ENCODE measurements at regions of chr12 and their contacts with region 1.

Region 1: DNA sequence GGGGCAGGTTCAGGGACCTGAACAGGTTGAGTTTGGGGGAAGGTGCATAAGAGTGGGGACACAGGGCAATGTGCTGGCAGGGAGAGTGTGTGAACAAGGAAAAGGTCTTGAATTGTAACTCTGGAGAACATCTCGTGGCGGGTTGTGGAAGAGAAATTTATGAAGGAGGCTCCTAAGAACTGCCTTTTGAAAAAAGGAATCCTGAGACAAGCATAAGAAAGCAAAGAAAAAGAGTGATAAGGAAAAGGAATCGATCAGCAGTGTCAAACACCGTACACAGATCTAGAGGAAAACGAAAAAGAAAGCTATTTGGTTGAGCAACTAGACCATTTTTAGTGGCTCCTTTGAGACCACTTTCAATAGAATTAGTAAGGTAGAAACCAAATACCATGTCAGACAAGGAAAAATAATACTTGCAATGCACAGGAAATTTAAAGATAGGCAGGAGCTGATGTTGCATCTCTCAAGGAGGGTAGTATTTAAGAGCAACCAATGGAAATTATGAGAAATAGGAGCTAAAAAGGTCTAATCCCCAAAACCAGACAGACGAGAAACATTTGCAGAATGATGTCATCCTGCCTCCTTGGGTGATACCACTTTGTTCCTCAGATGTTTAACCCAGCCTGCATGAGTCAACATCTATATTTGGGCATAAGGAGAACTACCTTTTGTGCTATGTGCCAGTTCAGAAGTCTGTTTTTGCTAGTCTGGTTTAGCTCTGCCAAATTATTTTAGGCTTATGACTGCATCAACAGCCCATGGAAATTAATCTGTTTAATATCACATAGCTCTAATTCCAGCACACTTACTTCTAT is 64.5 kb upstream of the STK38L start:
- DNase-seq: peak; percentile 28
- H3K4me3 Mint-ChIP-seq: peak overlapping the region; percentile 49
- H3K27ac Mint-ChIP-seq: peak overlapping the region; percentile 80
- H3K4me1 Mint-ChIP-seq: peaks cover 49% of the 10 kb centered on the region
- H3K27me3 Mint-ChIP-seq: no peaks in the 10 kb centered on the region

Region 2: DNA sequence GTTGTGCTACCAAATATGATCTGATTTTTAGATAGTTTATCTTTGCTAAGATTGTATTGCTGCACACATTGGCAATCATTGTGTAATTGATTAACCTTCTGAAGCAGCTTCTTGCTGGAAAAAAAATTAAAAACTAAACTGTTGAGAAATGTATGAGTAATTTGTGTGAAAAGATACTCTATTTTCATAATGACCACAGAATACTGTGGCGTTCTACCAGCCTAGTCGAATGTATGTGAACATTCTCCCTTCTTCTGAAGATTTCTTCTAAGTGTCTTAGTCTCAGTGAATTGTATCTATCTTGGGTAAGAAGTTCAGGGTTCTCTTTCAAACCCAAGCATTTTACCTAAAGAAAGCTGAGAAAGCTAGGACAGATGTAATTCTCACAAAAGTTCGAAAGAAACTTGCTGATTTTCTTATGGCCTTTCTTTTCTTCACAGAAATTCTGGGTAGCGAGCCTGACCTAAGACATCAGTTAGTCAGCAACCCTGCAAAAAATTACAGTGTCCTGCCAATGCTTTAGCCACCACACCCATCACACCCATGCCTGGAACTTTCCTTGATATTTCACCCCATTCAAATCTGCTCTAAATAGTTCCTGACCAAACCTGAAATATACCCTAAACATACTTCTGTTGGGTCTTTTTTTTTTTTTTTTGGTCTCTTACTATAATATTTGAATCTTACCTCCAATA is 70.1 kb before region 1 on chr12:
- intact Hi-C with region 1: loop called (anchors 1 kb)
- DNase-seq: no peak
- H3K4me3 Mint-ChIP-seq: no peak overlapping the region
- H3K27ac Mint-ChIP-seq: peak overlapping the region; percentile 40
- H3K4me1 Mint-ChIP-seq: peaks cover 41% of the 10 kb centered on the region
- H3K27me3 Mint-ChIP-seq: no peaks in the 10 kb centered on the region

Region 3: GRCh38 chr12:27142101-27142721 is 37.4 kb before region 1 on chr12:
- intact Hi-C with region 1: loop called (anchors 2 kb)
- DNase-seq: no peak
- H3K4me3 Mint-ChIP-seq: no peak overlapping the region
- H3K27ac Mint-ChIP-seq: no peak overlapping the region
- H3K4me1 Mint-ChIP-seq: peaks cover 29% of the 10 kb centered on the region
- H3K27me3 Mint-ChIP-seq: no peaks in the 10 kb centered on the region

Region 4: GRCh38 chr12:27199638-27200300 is 20.2 kb after region 1 on chr12:
- intact Hi-C with region 1: loop called (anchors 1 kb)
- DNase-seq: no peak
- H3K4me3 Mint-ChIP-seq: no peak overlapping the region
- H3K27ac Mint-ChIP-seq: no peak overlapping the region
- H3K4me1 Mint-ChIP-seq: peaks cover 14% of the 10 kb centered on the region
- H3K27me3 Mint-ChIP-seq: no peaks in the 10 kb centered on the region

Region 5: DNA sequence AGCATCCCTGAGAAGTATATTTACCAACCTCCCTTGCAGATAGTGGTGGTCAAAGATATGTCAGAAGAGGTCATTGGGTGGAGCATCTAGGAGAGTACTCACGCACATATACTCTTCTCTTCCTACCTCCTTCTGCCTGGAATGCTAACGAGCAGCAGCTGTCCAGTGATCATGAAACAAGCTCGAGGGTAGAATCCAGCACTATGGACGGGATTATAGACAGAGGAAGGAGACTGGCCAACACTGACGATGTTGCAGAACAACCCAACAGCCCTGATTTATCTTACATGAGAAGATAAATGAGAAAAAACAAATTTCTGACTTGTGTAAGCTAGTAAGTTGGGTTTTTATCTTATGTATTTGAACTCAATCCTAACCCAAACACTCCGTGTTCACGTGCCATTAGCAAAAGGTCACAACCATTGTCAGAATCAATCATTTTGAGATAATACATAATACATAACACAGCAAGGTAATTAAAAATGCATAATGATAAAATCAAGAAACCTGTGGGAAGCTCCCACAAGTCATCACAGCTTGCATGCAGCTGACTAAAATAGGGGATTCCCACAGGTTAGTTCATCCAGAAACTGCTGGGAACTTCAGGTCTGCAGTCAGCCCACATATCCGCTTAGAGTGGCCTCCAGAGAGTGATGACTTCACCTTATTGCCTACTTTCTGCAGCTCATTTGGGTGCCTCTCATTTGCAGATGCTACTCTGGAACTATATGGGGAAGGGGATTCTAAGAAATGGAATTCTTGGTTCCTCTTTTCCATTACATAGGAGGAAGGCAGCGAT is 28.2 kb after region 1 on chr12:
- intact Hi-C with region 1: loop called (anchors 1 kb)
- DNase-seq: peak; percentile 23
- H3K4me3 Mint-ChIP-seq: no peak overlapping the region
- H3K27ac Mint-ChIP-seq: no peak overlapping the region
- H3K4me1 Mint-ChIP-seq: peaks cover 22% of the 10 kb centered on the region
- H3K27me3 Mint-ChIP-seq: no peaks in the 10 kb centered on the region

Region 6: GRCh38 chr12:27220057-27220987 is 40.7 kb after region 1 on chr12:
- intact Hi-C with region 1: loop called (anchors 5 kb)
- DNase-seq: no peak
- H3K4me3 Mint-ChIP-seq: no peak overlapping the region
- H3K27ac Mint-ChIP-seq: peak overlapping the region; percentile 34
- H3K4me1 Mint-ChIP-seq: peaks cover 15% of the 10 kb centered on the region
- H3K27me3 Mint-ChIP-seq: no peaks in the 10 kb centered on the region

Region 7: GRCh38 chr12:27243804-27244683 is 64.4 kb after region 1 on chr12 and contains the start of gene STK38L:
- intact Hi-C with region 1: loop called (anchors 1 kb)
- DNase-seq: peak; percentile 96
- H3K4me3 Mint-ChIP-seq: peak within 1 kb of the TSS; percentile 96
- H3K27ac Mint-ChIP-seq: peak within 1 kb of the TSS; percentile 94
- H3K4me1 Mint-ChIP-seq: peaks cover 35% of the 10 kb centered on the region
- H3K27me3 Mint-ChIP-seq: no peaks in the 10 kb centered on the region
- total RNA-seq, gene STK38L: 23.4 and 24.2 TPM in 2 replicates